CD4-positive, alpha-beta T cell (primary cell): ENCODE measurements at regions of chr1 and their contacts with region 1.

Region 1: GRCh38 chr1:150464422-150464826 is 22.8 kb upstream of the TARS2 start:
- DNase-seq: peak; percentile 45 to 85 (median 63)
- ATAC-seq: peak; percentile 94
- H3K4me3 ChIP-seq: no peak overlapping the region
- H3K4me3 Mint-ChIP-seq: no peak overlapping the region
- H3K27ac ChIP-seq: no peak overlapping the region
- H3K27ac Mint-ChIP-seq: peak overlapping the region; percentile 7
- H3K4me1 ChIP-seq: no peaks in the 10 kb centered on the region
- H3K4me1 Mint-ChIP-seq: peaks cover 5% of the 10 kb centered on the region
- H3K27me3 ChIP-seq: no peaks in the 10 kb centered on the region
- H3K27me3 Mint-ChIP-seq: no peaks in the 10 kb centered on the region
- CTCF ChIP-seq: peak; percentile 79

Region 2: DNA sequence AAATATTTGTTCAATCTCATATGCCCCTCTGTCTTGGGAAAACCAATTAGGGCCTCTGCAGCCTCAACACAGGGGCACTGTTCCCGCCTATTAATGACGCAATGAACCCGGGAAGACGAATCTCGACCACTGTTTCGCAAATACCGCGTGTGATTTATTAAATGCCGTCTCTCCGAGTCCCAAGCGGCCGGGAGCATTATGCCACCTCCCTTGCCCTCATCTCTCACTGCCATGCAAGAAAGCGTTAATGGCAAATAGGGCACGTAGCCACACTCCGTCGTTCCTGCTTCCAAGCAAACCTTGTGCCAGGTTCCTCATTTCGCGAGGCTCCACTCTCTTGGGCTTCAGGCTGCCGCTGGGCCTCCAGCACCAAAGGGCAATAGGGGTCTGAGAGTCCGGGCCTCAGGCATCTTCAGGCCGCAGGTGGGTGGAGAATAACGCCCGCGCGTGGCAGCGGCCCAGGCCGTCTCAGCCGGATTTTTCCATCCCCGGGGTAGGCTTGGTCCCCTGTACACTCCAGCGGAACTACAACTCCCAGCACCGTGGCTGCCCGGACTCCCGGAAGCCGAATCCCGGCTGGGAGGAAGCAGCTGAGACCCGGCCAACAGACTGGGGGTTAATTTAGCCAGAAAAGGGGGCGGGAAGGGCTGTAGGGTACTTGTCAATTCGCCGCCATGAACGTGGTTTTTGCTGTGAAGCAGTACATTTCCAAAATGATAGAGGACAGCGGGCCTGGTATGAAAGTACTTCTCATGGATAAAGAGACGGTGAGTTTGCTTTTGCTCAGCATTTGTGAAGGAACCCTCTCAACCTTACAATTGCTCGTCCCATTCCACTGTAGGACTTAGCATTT is 397.0 kb before region 1 on chr1 and contains the start of gene VPS45:
- CTCF ChIA-PET with region 1: no interaction called
- POLR2A ChIA-PET with region 1: no interaction called
- intact Hi-C with region 1: no loop called
- DNase-seq: peak; percentile 54 to 89 (median 72)
- ATAC-seq: peak; percentile 91
- H3K4me3 ChIP-seq: peak within 1 kb of the TSS; percentile 79
- H3K4me3 Mint-ChIP-seq: peak within 1 kb of the TSS; percentile 96
- H3K27ac ChIP-seq: peak within 1 kb of the TSS; percentile 31 to 59
- H3K27ac Mint-ChIP-seq: peak within 1 kb of the TSS; percentile 83
- H3K4me1 ChIP-seq: peaks cover 6% of the 10 kb centered on the region
- H3K4me1 Mint-ChIP-seq: peaks cover 44% of the 10 kb centered on the region
- H3K27me3 ChIP-seq: no peaks in the 10 kb centered on the region
- H3K27me3 Mint-ChIP-seq: no peaks in the 10 kb centered on the region
- CTCF ChIP-seq: no peak
- total RNA-seq, gene VPS45: 9.6 to 10.7 TPM

Region 3: DNA sequence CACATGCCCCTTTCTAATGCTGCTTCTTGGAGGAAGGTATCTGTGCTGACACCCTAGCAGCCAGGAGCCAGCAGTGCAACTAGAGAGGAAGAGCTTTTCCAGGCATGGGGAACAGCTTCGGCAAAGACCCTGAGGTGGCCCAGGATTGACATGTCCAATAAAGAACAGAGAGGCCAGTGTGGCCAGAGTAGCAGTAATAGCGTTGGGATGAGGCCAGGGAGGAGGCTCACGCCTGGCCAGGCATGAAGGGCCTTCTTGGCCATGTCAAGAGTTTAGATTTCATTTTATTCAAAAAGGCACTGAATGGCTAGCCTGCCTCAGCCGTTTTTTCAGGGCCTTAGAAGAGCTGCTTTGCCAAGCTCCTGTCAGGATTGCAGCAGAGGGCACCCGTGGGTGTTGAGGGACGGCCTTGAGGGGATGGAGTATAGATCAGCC is 68.5 kb after region 1 on chr1:
- CTCF ChIA-PET with region 1: interaction called, 7 read pairs
- POLR2A ChIA-PET with region 1: no interaction called
- intact Hi-C with region 1: loop called (anchors 2 kb)
- DNase-seq: no peak
- ATAC-seq: no peak
- H3K4me3 ChIP-seq: no peak overlapping the region
- H3K4me3 Mint-ChIP-seq: no peak overlapping the region
- H3K27ac ChIP-seq: no peak overlapping the region
- H3K27ac Mint-ChIP-seq: no peak overlapping the region
- H3K4me1 ChIP-seq: no peaks in the 10 kb centered on the region
- H3K4me1 Mint-ChIP-seq: no peaks in the 10 kb centered on the region
- H3K27me3 ChIP-seq: no peaks in the 10 kb centered on the region
- H3K27me3 Mint-ChIP-seq: no peaks in the 10 kb centered on the region
- CTCF ChIP-seq: no peak

Region 4: DNA sequence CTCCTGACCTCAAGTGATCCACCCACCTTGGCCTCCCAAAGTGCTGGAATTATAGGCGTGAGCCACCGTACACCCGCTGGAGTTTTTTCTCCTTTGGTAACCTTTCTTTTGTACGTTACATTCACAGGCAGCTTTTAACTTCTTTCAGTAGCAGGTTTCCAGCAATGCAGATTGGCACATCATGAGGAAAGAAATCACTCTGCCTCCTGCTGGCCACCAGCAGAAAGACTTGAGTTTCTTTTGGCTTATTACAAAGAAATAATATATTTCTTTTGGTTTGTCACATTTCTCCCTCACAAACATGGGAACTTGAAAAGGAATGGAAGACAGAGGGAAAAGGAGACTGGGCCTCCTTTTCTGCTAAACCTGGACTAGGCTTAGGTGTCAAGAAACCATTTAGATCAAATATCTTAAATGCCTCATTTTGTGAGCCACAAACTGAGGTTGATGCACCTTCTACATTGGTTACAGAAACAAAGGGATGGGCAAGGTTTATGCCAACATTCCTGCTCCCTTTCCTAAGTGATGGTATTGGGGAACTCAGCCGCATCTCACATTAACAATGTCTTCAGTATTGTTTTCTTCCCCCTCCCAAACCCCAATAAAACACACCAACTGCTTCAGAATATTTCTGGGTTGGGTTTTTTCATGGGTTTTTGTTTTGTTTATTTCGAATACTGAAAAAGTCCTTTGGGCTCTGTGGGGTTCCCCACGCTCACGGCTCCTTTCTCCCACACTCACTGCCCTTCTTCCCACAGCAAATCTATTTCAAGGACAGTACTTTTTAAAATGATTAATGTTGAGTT is 157.3 kb after region 1 on chr1:
- CTCF ChIA-PET with region 1: no interaction called
- POLR2A ChIA-PET with region 1: no interaction called
- intact Hi-C with region 1: loop called (anchors 2 to 5 kb)
- DNase-seq: peak; percentile 45 to 85 (median 58)
- ATAC-seq: peak; percentile 78
- H3K4me3 ChIP-seq: no peak overlapping the region
- H3K4me3 Mint-ChIP-seq: peak overlapping the region; percentile 4
- H3K27ac ChIP-seq: peak overlapping the region; percentile 23 to 38
- H3K27ac Mint-ChIP-seq: peak overlapping the region; percentile 73
- H3K4me1 ChIP-seq: peaks cover 30% of the 10 kb centered on the region
- H3K4me1 Mint-ChIP-seq: peaks cover 60% of the 10 kb centered on the region
- H3K27me3 ChIP-seq: no peaks in the 10 kb centered on the region
- H3K27me3 Mint-ChIP-seq: no peaks in the 10 kb centered on the region
- CTCF ChIP-seq: peak; percentile 67

Region 5: GRCh38 chr1:150979092-150980056 is 515.0 kb after region 1 on chr1:
- CTCF ChIA-PET with region 1: no interaction called
- POLR2A ChIA-PET with region 1: no interaction called
- intact Hi-C with region 1: loop called in 1 of 2 experiments (anchors 10 kb)
- DNase-seq: peak; percentile 81 to 94 (median 88)
- ATAC-seq: peak; percentile 55
- H3K4me3 ChIP-seq: peak overlapping the region; percentile 41
- H3K4me3 Mint-ChIP-seq: peak overlapping the region; percentile 75
- H3K27ac ChIP-seq: no peak overlapping the region
- H3K27ac Mint-ChIP-seq: peak overlapping the region; percentile 59
- H3K4me1 ChIP-seq: peaks cover 45% of the 10 kb centered on the region
- H3K4me1 Mint-ChIP-seq: peaks cover 40% of the 10 kb centered on the region
- H3K27me3 ChIP-seq: no peaks in the 10 kb centered on the region
- H3K27me3 Mint-ChIP-seq: no peaks in the 10 kb centered on the region
- CTCF ChIP-seq: peak; percentile 100

Region 6: GRCh38 chr1:150995896-150996295 is 531.5 kb after region 1 on chr1:
- CTCF ChIA-PET with region 1: no interaction called
- POLR2A ChIA-PET with region 1: no interaction called
- intact Hi-C with region 1: loop called (anchors 1 to 5 kb)
- DNase-seq: peak in 6 of 14 experiments; percentile 15 to 65 (median 42)
- ATAC-seq: peak; percentile 60
- H3K4me3 ChIP-seq: no peak overlapping the region
- H3K4me3 Mint-ChIP-seq: no peak overlapping the region
- H3K27ac ChIP-seq: peak overlapping the region in 1 of 2 donors; percentile 26
- H3K27ac Mint-ChIP-seq: peak overlapping the region; percentile 65
- H3K4me1 ChIP-seq: peaks cover 27% of the 10 kb centered on the region
- H3K4me1 Mint-ChIP-seq: peaks cover 16% of the 10 kb centered on the region
- H3K27me3 ChIP-seq: no peaks in the 10 kb centered on the region
- H3K27me3 Mint-ChIP-seq: no peaks in the 10 kb centered on the region
- CTCF ChIP-seq: peak; percentile 96